CD4-positive, alpha-beta memory T cell (primary cell): ENCODE measurements at regions of chr12 and their contacts with region 1.

Region 1: DNA sequence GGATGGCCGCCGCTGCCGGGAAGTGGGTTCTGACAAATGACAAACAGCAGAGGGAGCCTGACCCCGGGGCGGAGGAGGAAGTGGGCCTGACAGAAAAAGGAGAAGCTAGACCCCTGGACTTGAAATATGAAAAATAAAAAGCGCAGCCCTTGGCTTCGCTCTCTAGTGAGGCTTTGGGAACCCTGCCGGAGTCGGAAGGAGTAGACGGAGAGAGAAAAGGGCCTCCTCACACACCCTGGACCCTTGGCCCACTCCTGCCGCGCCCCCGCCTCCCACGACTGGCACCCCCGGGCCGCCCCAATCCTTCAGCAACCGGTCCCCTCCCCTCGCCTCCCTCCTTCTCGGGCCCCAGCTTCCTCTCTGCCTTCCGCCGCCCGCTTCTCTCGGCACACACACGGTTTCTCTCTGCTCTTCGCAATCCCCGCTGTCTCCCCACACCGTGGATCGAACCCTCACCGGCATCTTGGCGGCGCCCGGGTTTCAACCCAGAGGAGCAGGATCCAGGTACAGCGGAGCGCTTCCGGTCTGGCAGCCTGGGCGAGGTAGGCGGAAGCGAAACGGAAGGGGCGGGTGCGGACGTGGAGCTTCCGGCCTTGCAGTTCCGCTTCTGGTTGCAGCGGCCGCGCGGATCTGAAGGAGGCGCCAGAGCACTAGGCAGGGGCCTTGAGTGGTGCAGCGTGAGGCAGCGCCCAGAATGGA is at the start of gene ARPC3:
- DNase-seq: peak; percentile 94 to 96 (median 94)
- H3K4me3 ChIP-seq: peak within 1 kb of the TSS; percentile 76 to 90
- H3K4me3 Mint-ChIP-seq: peak within 1 kb of the TSS; percentile 99 to 100 (median 100)
- H3K27ac ChIP-seq: peak within 1 kb of the TSS; percentile 97
- H3K27ac Mint-ChIP-seq: peak within 1 kb of the TSS; percentile 99 to 100 (median 99)
- H3K4me1 ChIP-seq: peaks cover 34% of the 10 kb centered on the region
- H3K4me1 Mint-ChIP-seq: peaks cover 17 to 47% (median 38%) of the 10 kb centered on the region in 4 donors
- H3K27me3 ChIP-seq: no peaks in the 10 kb centered on the region
- H3K27me3 Mint-ChIP-seq: no peaks in the 10 kb centered on the region
- total RNA-seq, gene ARPC3: 191 to 203 TPM

Region 2: DNA sequence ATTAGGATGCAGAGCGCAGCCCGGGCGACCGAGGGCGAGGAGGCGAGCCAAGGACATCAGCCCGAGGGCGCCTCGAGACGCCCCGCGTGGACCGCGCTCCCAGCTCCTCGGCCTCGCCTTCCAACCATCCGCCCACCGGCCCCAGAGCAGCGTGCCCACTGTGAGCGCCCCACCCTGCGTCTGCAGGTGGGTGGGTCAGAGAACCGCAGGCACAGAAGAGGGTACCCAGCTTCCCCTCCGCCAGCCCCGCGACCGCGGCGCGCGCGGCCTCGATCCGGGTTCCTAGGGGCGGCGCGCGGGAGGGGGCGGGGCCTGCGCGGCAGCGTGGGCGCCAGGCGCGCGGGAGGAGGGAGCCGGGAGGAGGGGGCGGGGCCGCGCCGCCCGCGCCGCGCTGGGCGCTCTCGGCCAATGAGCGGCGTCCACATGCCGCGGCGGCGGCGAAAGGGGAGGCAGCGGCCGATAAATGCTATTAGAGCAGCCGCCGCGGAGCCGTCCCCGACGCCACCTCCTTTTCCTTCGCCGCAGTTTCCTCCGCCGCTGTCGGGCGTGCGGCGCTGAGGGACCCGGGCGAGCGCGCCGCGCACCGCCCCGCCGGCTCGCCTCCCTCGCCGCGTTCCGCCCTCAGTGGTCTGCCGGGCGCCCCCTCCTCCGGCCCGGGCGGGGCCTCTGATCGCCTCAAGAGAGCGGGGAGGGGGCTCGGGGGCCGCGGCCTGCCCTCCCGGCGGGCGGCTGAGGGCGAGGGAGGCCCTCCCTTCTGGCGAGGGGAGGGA is 169.0 kb before region 1 on chr12 and contains the start of gene ATP2A2:
- CTCF ChIA-PET with region 1: no interaction called
- POLR2A ChIA-PET with region 1: interaction called, 8 read pairs
- intact Hi-C with region 1: loop called (anchors 5 kb)
- DNase-seq: peak; percentile 89 to 93 (median 92)
- H3K4me3 ChIP-seq: peak within 1 kb of the TSS; percentile 87 to 88
- H3K4me3 Mint-ChIP-seq: peak within 1 kb of the TSS; percentile 91 to 98 (median 94)
- H3K27ac ChIP-seq: peak within 1 kb of the TSS; percentile 85
- H3K27ac Mint-ChIP-seq: peak within 1 kb of the TSS; percentile 90 to 98 (median 94)
- H3K4me1 ChIP-seq: peaks cover 47% of the 10 kb centered on the region
- H3K4me1 Mint-ChIP-seq: peaks cover 36 to 53% (median 43%) of the 10 kb centered on the region in 4 donors
- H3K27me3 ChIP-seq: no peaks in the 10 kb centered on the region
- H3K27me3 Mint-ChIP-seq: no peaks in the 10 kb centered on the region
- total RNA-seq, gene ATP2A2: 90.4 to 91.0 TPM

Region 3: DNA sequence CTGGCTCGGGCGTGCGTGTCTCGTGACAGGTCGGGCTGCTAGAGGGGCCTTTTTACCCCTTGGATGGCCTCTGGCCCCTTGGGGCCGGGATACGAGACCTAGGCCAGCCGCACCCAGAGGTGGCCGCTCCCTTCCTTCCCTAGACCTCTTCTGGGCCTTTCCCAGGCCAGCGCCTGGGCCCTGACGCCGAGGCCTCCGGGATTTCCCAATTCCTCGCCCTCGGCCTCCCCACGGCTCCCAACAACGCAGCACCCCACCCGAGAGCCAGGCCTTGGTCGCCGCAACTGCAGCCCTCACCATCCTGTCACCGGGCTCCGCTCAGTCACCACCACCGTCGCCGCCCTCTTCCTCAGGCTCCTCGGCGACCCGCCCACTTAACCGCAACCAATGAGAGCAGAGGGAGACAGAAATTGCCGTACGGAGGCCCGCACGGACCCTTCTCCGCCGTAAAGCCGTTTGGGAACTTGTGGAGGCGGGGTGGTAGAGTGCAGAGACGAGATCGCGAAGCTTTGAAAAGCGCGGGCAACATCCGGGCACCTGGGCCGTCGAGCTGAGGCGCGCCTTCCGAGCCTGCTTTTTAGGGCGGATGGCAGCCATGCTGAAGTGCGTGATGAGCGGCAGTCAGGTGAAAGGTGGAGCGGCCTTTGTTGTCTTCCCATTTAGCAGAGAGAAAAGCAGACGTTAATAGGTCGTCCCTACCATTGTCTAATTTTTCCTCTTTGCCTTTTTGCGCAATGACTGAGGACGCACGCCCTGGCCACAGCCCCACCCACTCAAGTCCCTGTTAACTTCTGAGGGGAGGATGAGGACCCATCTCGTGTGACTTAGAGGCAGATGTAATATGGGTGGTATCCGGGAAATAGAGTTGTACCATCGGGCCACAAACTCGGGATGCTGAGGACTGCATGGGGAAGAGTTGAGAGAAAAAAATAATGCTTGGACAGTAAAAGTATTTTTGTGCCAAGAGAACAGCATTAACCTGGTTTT is 52.1 kb after region 1 on chr12 and contains the starts of genes RAD9B and VPS29:
- CTCF ChIA-PET with region 1: interaction called, 8 read pairs
- POLR2A ChIA-PET with region 1: interaction called, 36 read pairs
- intact Hi-C with region 1: loop called (anchors 1 kb)
- DNase-seq: peak; percentile 99 to 100 (median 99)
- H3K4me3 ChIP-seq: peak within 1 kb of the TSS; percentile 85 to 91
- H3K4me3 Mint-ChIP-seq: peak within 1 kb of the TSS; percentile 96 to 99 (median 98)
- H3K27ac ChIP-seq: peak within 1 kb of the TSS; percentile 94
- H3K27ac Mint-ChIP-seq: peak within 1 kb of the TSS; percentile 95 to 99 (median 97)
- H3K4me1 ChIP-seq: peaks cover 35% of the 10 kb centered on the region
- H3K4me1 Mint-ChIP-seq: peaks cover 20 to 44% (median 30%) of the 10 kb centered on the region in 4 donors
- H3K27me3 ChIP-seq: no peaks in the 10 kb centered on the region
- H3K27me3 Mint-ChIP-seq: no peaks in the 10 kb centered on the region
- total RNA-seq, gene RAD9B: 1.1 to 2.1 TPM
- total RNA-seq, gene VPS29: 117 to 121 TPM

Region 4: GRCh38 chr12:110583137-110584059 is 133.4 kb after region 1 on chr12 and contains the start of gene PPTC7:
- CTCF ChIA-PET with region 1: interaction called, 13 read pairs
- POLR2A ChIA-PET with region 1: interaction called, 3 read pairs
- intact Hi-C with region 1: no loop called
- DNase-seq: peak; percentile 91 to 97 (median 94)
- H3K4me3 ChIP-seq: peak within 1 kb of the TSS; percentile 77 to 84
- H3K4me3 Mint-ChIP-seq: peak within 1 kb of the TSS; percentile 89 to 98 (median 96)
- H3K27ac ChIP-seq: peak within 1 kb of the TSS; percentile 93
- H3K27ac Mint-ChIP-seq: peak within 1 kb of the TSS; percentile 94 to 97 (median 96)
- H3K4me1 ChIP-seq: peaks cover 62% of the 10 kb centered on the region
- H3K4me1 Mint-ChIP-seq: peaks cover 47 to 73% (median 61%) of the 10 kb centered on the region in 4 donors
- H3K27me3 ChIP-seq: no peaks in the 10 kb centered on the region
- H3K27me3 Mint-ChIP-seq: no peaks in the 10 kb centered on the region
- total RNA-seq, gene PPTC7: 32.6 to 35.6 TPM

Region 5: GRCh38 chr12:110613771-110614684 is 164.1 kb after region 1 on chr12 and contains the start of gene TCTN1:
- CTCF ChIA-PET with region 1: interaction called, 19 read pairs
- POLR2A ChIA-PET with region 1: interaction called, 12 read pairs
- intact Hi-C with region 1: no loop called
- DNase-seq: peak; percentile 93 to 96 (median 94)
- H3K4me3 ChIP-seq: peak within 1 kb of the TSS; percentile 53 to 86
- H3K4me3 Mint-ChIP-seq: peak within 1 kb of the TSS; percentile 86 to 90 (median 88)
- H3K27ac ChIP-seq: peak within 1 kb of the TSS; percentile 72
- H3K27ac Mint-ChIP-seq: peak within 1 kb of the TSS; percentile 65 to 94 (median 88)
- H3K4me1 ChIP-seq: peaks cover 8% of the 10 kb centered on the region
- H3K4me1 Mint-ChIP-seq: peaks cover 4 to 9% (median 6%) of the 10 kb centered on the region in 4 donors
- H3K27me3 ChIP-seq: no peaks in the 10 kb centered on the region
- H3K27me3 Mint-ChIP-seq: no peaks in the 10 kb centered on the region
- total RNA-seq, gene TCTN1: 5.8 to 7.7 TPM

Region 6: DNA sequence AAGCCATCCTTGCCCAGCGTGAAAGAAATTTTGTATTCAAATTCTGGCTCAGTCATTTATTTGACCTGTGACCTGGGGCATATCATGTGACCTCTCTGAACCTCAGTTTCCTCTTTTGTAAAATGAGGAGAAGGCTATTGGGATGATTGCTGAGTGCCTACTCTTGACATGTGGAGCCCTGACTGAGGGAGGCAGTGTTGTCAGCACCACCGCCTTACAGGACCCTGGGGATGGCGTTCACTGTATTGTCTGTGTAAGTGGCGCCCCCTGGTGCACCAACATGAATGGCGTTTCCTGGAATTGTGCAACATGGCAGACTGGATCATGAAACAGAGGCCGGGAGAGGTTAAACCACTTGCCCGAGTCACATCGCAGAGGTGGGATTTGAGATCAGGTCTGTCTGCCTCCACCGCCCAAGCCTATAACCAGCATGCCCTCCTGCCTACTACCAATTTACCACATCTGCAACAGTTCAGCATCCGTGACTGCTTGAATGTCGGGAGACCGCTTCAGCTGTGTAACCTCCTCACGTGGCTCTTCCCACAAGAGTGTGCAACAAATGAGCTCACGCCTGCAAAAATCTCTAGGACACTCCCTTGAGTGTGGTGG is 376.7 kb after region 1 on chr12:
- CTCF ChIA-PET with region 1: interaction called, 11 read pairs
- POLR2A ChIA-PET with region 1: interaction called, 7 read pairs
- intact Hi-C with region 1: loop called (anchors 1 kb)
- DNase-seq: peak; percentile 73 to 83 (median 77)
- H3K4me3 ChIP-seq: peak overlapping the region in 1 of 2 donors; percentile 5
- H3K4me3 Mint-ChIP-seq: peak overlapping the region; percentile 36 to 76 (median 66)
- H3K27ac ChIP-seq: no peak overlapping the region
- H3K27ac Mint-ChIP-seq: peak overlapping the region in 3 of 7 donors; percentile 9 to 89 (median 60)
- H3K4me1 ChIP-seq: peaks cover 6% of the 10 kb centered on the region
- H3K4me1 Mint-ChIP-seq: peaks cover 3 to 7% (median 7%) of the 10 kb centered on the region in 4 donors
- H3K27me3 ChIP-seq: no peaks in the 10 kb centered on the region
- H3K27me3 Mint-ChIP-seq: peaks cover 1 to 4% of the 10 kb centered on the region in 2 donors

Region 7: GRCh38 chr12:110869026-110869425 is 419.1 kb after region 1 on chr12:
- CTCF ChIA-PET with region 1: no interaction called
- POLR2A ChIA-PET with region 1: no interaction called
- intact Hi-C with region 1: no loop called
- DNase-seq: no peak
- H3K4me3 ChIP-seq: no peak overlapping the region
- H3K4me3 Mint-ChIP-seq: no peak overlapping the region
- H3K27ac ChIP-seq: no peak overlapping the region
- H3K27ac Mint-ChIP-seq: no peak overlapping the region
- H3K4me1 ChIP-seq: no peaks in the 10 kb centered on the region
- H3K4me1 Mint-ChIP-seq: no peaks in the 10 kb centered on the region
- H3K27me3 ChIP-seq: no peaks in the 10 kb centered on the region
- H3K27me3 Mint-ChIP-seq: peaks cover 3 to 7% of the 10 kb centered on the region in 2 donors